Naive thymus-derived CD4-positive, alpha-beta T cell (primary cell): ENCODE measurements at regions of chr17 and their contacts with region 1.

Region 1: DNA sequence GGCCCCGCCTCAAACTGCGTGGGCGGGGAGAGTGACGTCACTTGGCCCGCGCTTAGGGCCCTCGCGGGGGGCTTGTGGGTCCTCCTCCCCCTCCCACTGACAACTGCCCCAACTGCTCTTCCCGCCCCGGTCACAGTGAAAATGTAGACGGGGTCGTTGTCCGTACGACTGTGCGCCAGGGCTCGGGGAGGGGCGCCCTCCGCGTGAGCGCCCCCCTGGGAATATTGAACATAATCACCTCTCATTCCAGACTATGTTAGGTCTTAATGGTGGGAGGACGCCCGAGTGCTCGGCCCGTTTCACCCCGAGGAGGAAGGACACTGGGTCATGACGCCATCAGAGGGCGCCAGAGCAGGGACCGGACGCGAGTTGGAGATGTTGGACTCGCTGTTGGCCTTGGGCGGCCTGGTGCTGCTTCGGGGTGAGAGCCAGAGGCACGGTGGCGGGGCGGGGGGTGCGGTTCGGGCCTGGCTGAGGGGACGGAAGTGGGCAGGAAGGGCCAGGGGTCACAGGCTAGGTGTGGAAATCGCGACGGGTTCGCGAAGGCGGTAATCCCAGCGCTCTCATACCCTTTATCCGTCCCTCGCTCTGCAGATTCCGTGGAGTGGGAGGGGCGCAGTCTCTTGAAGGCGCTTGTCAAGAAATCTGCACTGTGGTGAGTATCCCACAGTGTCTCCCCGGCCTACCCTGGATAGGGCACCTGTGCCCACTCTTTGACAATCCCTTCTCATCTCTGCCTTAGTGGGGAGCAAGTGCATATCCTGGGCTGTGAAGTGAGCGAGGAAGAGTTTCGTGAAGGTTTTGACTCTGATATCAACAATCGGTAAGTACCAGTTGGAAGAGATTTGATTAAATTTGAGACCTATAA is at the start of gene ELP5:
- DNase-seq: peak in 5 of 9 donors; percentile 73 to 90 (median 83)
- ATAC-seq: peak; percentile 69
- H3K4me3 ChIP-seq: peak within 1 kb of the TSS; percentile 91
- H3K4me3 Mint-ChIP-seq: peak within 1 kb of the TSS; percentile 85 to 98 (median 96)
- H3K27ac ChIP-seq: peak within 1 kb of the TSS; percentile 94
- H3K27ac Mint-ChIP-seq: peak within 1 kb of the TSS; percentile 95 to 100 (median 99)
- H3K4me1 ChIP-seq: peaks cover 22 to 32% of the 10 kb centered on the region in 2 donors
- H3K4me1 Mint-ChIP-seq: peaks cover 29 to 51% (median 42%) of the 10 kb centered on the region in 7 donors
- H3K27me3 ChIP-seq: no peaks in the 10 kb centered on the region
- H3K27me3 Mint-ChIP-seq: peaks cover 0 to 4% (median 0%) of the 10 kb centered on the region in 5 donors
- total RNA-seq, gene ELP5: 26.9 to 49.1 (median 32.9) TPM

Region 2: GRCh38 chr17:7156342-7156940 is 96.0 kb before region 1 on chr17:
- CTCF ChIA-PET with region 1: no interaction called
- POLR2A ChIA-PET with region 1: no interaction called
- intact Hi-C with region 1: no loop called
- DNase-seq: no peak
- ATAC-seq: no peak
- H3K4me3 ChIP-seq: no peak overlapping the region
- H3K4me3 Mint-ChIP-seq: no peak overlapping the region
- H3K27ac ChIP-seq: no peak overlapping the region
- H3K27ac Mint-ChIP-seq: peak overlapping the region in 1 of 9 donors; percentile 73
- H3K4me1 ChIP-seq: no peaks in the 10 kb centered on the region
- H3K4me1 Mint-ChIP-seq: peaks cover 0 to 3% (median 0%) of the 10 kb centered on the region in 7 donors
- H3K27me3 ChIP-seq: no peaks in the 10 kb centered on the region
- H3K27me3 Mint-ChIP-seq: peaks cover 0 to 42% (median 20%) of the 10 kb centered on the region in 5 donors

Region 3: GRCh38 chr17:7214300-7215135 is 37.9 kb before region 1 on chr17:
- CTCF ChIA-PET with region 1: no interaction called
- POLR2A ChIA-PET with region 1: interaction called, 9 read pairs
- intact Hi-C with region 1: loop called (anchors 1 kb)
- DNase-seq: peak; percentile 96 to 99 (median 97)
- ATAC-seq: peak; percentile 90
- H3K4me3 ChIP-seq: peak overlapping the region; percentile 61
- H3K4me3 Mint-ChIP-seq: peak overlapping the region; percentile 76 to 97 (median 94)
- H3K27ac ChIP-seq: peak overlapping the region; percentile 97
- H3K27ac Mint-ChIP-seq: peak overlapping the region; percentile 90 to 100 (median 99)
- H3K4me1 ChIP-seq: peaks cover 25 to 49% of the 10 kb centered on the region in 2 donors
- H3K4me1 Mint-ChIP-seq: peaks cover 36 to 69% (median 65%) of the 10 kb centered on the region in 7 donors
- H3K27me3 ChIP-seq: no peaks in the 10 kb centered on the region
- H3K27me3 Mint-ChIP-seq: peaks cover 0 to 16% (median 0%) of the 10 kb centered on the region in 5 donors

Region 4: GRCh38 chr17:7280519-7281429 is 28.4 kb after region 1 on chr17:
- CTCF ChIA-PET with region 1: interaction called, 4 read pairs
- POLR2A ChIA-PET with region 1: no interaction called
- intact Hi-C with region 1: loop called in 1 of 2 experiments (anchors 1 kb)
- DNase-seq: peak; percentile 76 to 88 (median 85)
- ATAC-seq: peak; percentile 95
- H3K4me3 ChIP-seq: peak overlapping the region; percentile 66
- H3K4me3 Mint-ChIP-seq: peak overlapping the region; percentile 77 to 87 (median 84)
- H3K27ac ChIP-seq: no peak overlapping the region
- H3K27ac Mint-ChIP-seq: peak overlapping the region in 7 of 9 donors; percentile 6 to 88 (median 51)
- H3K4me1 ChIP-seq: peaks cover 11 to 23% of the 10 kb centered on the region in 2 donors
- H3K4me1 Mint-ChIP-seq: peaks cover 14 to 31% (median 21%) of the 10 kb centered on the region in 7 donors
- H3K27me3 ChIP-seq: no peaks in the 10 kb centered on the region
- H3K27me3 Mint-ChIP-seq: peaks cover 6 to 44% (median 17%) of the 10 kb centered on the region in 5 donors

Region 5: DNA sequence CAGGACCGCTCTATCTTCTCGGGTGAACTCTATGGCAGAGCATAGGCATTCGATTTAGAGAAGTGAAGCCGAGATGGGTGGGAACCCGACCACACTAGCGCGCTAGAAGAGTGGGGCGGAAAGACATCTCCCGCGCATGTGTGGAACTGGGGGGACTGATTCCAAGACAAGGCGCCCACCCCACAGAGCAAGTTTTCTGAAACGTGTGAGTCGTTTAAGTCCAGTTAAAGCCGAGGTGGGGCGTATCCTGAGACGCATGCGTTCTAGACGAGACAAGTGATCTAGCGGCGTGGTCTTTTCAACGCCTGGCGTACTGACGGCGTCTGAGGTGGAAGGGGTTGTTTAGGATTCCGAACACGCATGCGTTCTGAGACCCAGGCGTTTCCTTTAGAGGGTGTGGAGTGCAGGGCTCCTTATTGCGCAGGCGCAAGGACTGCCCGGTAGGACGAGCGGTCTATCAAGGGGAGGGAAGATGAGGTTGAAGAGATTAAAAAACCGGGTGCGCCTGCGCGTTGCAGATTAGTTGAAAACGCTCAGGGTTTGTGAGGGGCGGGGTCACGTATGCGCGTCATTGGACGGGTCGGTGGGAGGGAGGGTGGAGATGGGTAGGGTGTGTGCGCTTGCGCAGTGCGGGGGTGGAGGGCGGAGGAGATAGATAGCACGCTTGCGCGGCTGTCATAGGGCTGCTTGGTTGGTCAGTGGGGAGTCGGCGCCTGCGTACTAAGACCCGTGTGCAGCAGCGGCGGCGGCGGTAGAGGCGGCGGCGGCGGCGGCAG is 54.7 kb after region 1 on chr17 and contains the start of gene EIF5A:
- CTCF ChIA-PET with region 1: no interaction called
- POLR2A ChIA-PET with region 1: interaction called, 3 read pairs
- intact Hi-C with region 1: loop called (anchors 1 kb)
- DNase-seq: peak; percentile 99 to 100 (median 100)
- ATAC-seq: peak; percentile 79
- H3K4me3 ChIP-seq: peak within 1 kb of the TSS; percentile 78
- H3K4me3 Mint-ChIP-seq: peak within 1 kb of the TSS; percentile 90 to 99 (median 95)
- H3K27ac ChIP-seq: peak within 1 kb of the TSS; percentile 100
- H3K27ac Mint-ChIP-seq: peak within 1 kb of the TSS; percentile 98 to 100 (median 99)
- H3K4me1 ChIP-seq: peaks cover 19 to 20% of the 10 kb centered on the region in 2 donors
- H3K4me1 Mint-ChIP-seq: peaks cover 28 to 44% (median 35%) of the 10 kb centered on the region in 7 donors
- H3K27me3 ChIP-seq: no peaks in the 10 kb centered on the region
- H3K27me3 Mint-ChIP-seq: peaks cover 0 to 9% (median 0%) of the 10 kb centered on the region in 5 donors
- total RNA-seq, gene EIF5A: 237 to 666 (median 453) TPM

Region 6: DNA sequence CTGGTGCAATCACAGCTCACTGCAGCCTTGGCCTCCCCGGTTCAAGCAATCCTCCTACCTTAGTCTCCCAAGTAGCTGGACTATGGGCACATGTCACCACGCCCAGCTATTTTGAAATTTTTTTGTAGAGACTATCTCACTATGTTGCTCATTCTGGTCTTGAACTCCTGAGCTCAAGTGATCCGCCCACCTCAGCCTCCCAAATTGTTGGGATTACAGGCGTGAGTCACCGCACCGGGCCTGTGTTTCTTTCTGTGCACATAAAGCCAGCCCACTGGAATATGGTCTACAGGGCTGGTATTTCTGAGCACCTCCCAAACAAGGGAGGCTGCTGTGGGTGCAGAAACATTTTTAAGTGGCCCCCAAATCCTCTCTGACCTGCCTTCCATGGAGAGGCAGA is 110.9 kb after region 1 on chr17:
- CTCF ChIA-PET with region 1: no interaction called
- POLR2A ChIA-PET with region 1: no interaction called
- intact Hi-C with region 1: no loop called
- DNase-seq: no peak
- ATAC-seq: no peak
- H3K4me3 ChIP-seq: no peak overlapping the region
- H3K4me3 Mint-ChIP-seq: no peak overlapping the region
- H3K27ac ChIP-seq: no peak overlapping the region
- H3K27ac Mint-ChIP-seq: no peak overlapping the region
- H3K4me1 ChIP-seq: no peaks in the 10 kb centered on the region
- H3K4me1 Mint-ChIP-seq: peaks cover 0 to 2% (median 0%) of the 10 kb centered on the region in 7 donors
- H3K27me3 ChIP-seq: no peaks in the 10 kb centered on the region
- H3K27me3 Mint-ChIP-seq: peaks cover 0 to 4% (median 0%) of the 10 kb centered on the region in 5 donors

Region 7: DNA sequence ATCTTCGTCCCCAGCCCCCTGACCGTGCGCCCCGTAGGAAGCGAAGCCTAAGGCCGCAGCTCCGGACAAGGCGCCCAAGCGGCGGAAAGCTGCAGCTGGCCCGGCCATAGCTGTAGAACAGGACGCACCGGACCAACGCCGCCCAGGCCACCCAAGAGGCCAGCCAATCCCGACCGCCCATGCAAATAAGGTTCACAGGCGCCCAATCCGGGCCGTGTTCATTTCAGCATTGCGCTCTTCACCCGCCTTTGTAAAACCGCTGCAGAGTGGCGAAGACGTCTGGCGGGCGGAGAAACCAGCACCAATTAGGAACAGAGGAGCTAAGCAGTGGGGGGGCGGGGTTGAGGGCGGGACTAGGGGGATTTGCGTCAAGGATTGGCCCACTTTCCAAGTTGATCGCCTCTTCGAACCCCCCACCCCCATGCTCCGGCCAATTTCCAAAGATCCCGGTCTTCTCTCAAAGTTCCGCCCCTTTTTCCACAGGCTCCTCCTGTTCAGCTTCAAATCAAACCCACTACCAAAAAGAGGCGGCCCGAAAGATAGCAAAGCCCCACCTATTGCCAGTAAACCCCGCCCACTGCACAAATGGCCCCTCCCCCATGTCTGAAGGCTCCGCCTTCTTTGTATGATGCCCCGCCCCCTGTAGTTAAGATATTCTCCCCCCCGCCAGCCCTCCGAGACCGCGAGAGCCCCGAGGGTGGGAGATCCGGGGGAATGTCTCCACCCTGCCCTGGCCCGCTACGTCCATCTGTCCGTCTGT is 151.7 kb after region 1 on chr17 and contains the start of gene TMEM256:
- CTCF ChIA-PET with region 1: no interaction called
- POLR2A ChIA-PET with region 1: no interaction called
- intact Hi-C with region 1: loop called in 1 of 2 experiments (anchors 5 kb)
- DNase-seq: peak; percentile 79 to 96 (median 91)
- ATAC-seq: peak; percentile 93
- H3K4me3 ChIP-seq: peak within 1 kb of the TSS; percentile 95
- H3K4me3 Mint-ChIP-seq: peak within 1 kb of the TSS; percentile 87 to 98 (median 96)
- H3K27ac ChIP-seq: peak within 1 kb of the TSS; percentile 78
- H3K27ac Mint-ChIP-seq: peak within 1 kb of the TSS; percentile 91 to 100 (median 96)
- H3K4me1 ChIP-seq: peaks cover 9 to 10% of the 10 kb centered on the region in 2 donors
- H3K4me1 Mint-ChIP-seq: peaks cover 8 to 25% (median 21%) of the 10 kb centered on the region in 7 donors
- H3K27me3 ChIP-seq: no peaks in the 10 kb centered on the region
- H3K27me3 Mint-ChIP-seq: peaks cover 0 to 23% (median 0%) of the 10 kb centered on the region in 5 donors
- total RNA-seq, gene TMEM256: 31.5 to 58.5 (median 48.2) TPM

Region 8: GRCh38 chr17:7583253-7584109 is 331.1 kb after region 1 on chr17 and contains the start of gene MPDU1:
- CTCF ChIA-PET with region 1: no interaction called
- POLR2A ChIA-PET with region 1: interaction called, 3 read pairs
- intact Hi-C with region 1: loop called in 1 of 2 experiments (anchors 1 kb)
- DNase-seq: peak; percentile 89 to 98 (median 97)
- ATAC-seq: peak; percentile 80
- H3K4me3 ChIP-seq: peak within 1 kb of the TSS; percentile 100
- H3K4me3 Mint-ChIP-seq: peak within 1 kb of the TSS; percentile 89 to 100 (median 99)
- H3K27ac ChIP-seq: peak within 1 kb of the TSS; percentile 95
- H3K27ac Mint-ChIP-seq: peak within 1 kb of the TSS; percentile 98 to 100 (median 100)
- H3K4me1 ChIP-seq: peaks cover 28 to 35% of the 10 kb centered on the region in 2 donors
- H3K4me1 Mint-ChIP-seq: peaks cover 33 to 60% (median 55%) of the 10 kb centered on the region in 7 donors
- H3K27me3 ChIP-seq: no peaks in the 10 kb centered on the region
- H3K27me3 Mint-ChIP-seq: no peaks in the 10 kb centered on the region
- total RNA-seq, gene MPDU1: 25.4 to 79.8 (median 31.4) TPM